ENCODE measurements at regions of chr19 and their contacts with region 1.

Region 1: GRCh38 chr19:36489118-36489919 is at the start of gene ZNF566:
- DNase-seq: peak; percentile 97
- ATAC-seq: peak; percentile 95
- H3K4me3 ChIP-seq: peak within 1 kb of the TSS; percentile 64
- H3K27ac ChIP-seq: peak within 1 kb of the TSS; percentile 91
- H3K4me1 ChIP-seq: no peaks in the 10 kb centered on the region
- H3K27me3 ChIP-seq: no peaks in the 10 kb centered on the region
- CTCF ChIP-seq: no peak
- POLR2A ChIP-seq: peak; percentile 75
- RAD21 ChIP-seq: no peak
- total RNA-seq, gene ZNF566: 4.8 and 8.6 TPM in 2 replicates

Region 2: DNA sequence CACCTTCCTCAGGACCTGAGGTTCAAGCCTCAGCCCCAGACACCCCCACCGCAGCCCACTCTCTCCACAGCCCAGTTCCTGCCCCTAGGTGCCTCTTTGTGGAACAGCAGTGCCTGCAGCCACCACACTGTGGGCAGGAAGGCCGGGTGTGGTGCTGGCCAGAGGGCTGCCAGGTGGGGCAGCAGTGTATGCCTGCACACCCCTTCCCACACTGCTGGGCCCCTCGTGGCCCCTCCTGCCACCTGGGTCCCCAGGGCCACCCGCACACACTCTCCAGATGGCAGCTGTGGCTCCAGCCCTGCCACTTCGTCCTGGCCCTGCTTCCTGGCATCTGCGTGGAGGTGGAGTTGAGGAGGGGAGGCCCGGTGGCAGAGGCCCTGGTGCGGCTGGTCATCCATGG is 1412.7 kb before region 1 on chr19:
- CTCF ChIA-PET with region 1: no interaction called
- POLR2A ChIA-PET with region 1: no interaction called
- dilution Hi-C with region 1: no loop called
- in situ Hi-C with region 1: no loop called
- intact Hi-C with region 1: no loop called
- DNase-seq: no peak
- ATAC-seq: no peak
- H3K4me3 ChIP-seq: no peak overlapping the region
- H3K27ac ChIP-seq: no peak overlapping the region
- H3K4me1 ChIP-seq: no peaks in the 10 kb centered on the region
- H3K27me3 ChIP-seq: peaks cover 12% of the 10 kb centered on the region
- CTCF ChIP-seq: no peak
- POLR2A ChIP-seq: no peak
- RAD21 ChIP-seq: no peak

Region 3: DNA sequence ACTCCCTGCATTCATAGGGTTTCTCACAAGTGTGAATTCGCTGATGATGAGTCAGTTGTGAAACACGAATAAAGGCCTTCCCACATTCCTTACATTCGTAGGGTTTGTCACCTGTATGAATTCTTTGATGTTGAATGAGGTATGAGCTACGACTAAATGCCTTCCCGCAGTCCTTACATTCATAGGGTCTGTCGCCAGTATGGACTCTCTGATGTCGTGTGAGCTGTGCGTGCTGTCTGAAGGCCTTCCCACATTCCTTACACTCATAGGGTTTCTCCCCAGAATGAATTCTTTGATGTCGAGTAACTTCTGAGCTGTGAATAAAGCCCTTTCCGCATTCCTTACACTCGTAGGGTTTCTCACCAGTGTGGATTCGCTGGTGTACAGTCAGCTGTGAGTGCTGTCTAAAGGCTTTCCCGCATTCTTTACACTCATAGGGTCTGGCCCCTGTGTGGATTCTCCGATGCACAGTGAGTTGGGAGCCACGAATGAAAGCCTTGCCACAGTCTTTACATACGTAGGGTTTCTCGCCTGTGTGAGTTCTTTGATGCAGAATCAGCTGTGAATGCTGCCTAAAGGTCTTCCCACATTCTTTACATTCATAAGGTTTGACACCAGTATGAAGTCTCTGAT is 306.6 kb before region 1 on chr19:
- CTCF ChIA-PET with region 1: no interaction called
- POLR2A ChIA-PET with region 1: no interaction called
- dilution Hi-C with region 1: no loop called
- in situ Hi-C with region 1: loop called (anchors 25 kb)
- intact Hi-C with region 1: no loop called
- DNase-seq: peak; percentile 77
- ATAC-seq: peak; percentile 70
- H3K4me3 ChIP-seq: no peak overlapping the region
- H3K27ac ChIP-seq: 0 out of 2 replicates have a peak overlapping the region, but pooled peaks have one; percentile 6
- H3K4me1 ChIP-seq: peaks cover 2% of the 10 kb centered on the region; the same call in 1 of the 2 replicates
- H3K27me3 ChIP-seq: no peaks in the 10 kb centered on the region
- CTCF ChIP-seq: no peak
- POLR2A ChIP-seq: no peak
- RAD21 ChIP-seq: no peak

Region 4: GRCh38 chr19:36214386-36215275 is 274.7 kb before region 1 on chr19 and contains the starts of genes ZNF146 and ZNF565:
- CTCF ChIA-PET with region 1: interaction called, 3 read pairs
- POLR2A ChIA-PET with region 1: no interaction called
- dilution Hi-C with region 1: no loop called
- in situ Hi-C with region 1: no loop called
- intact Hi-C with region 1: loop called (anchors 5 kb)
- DNase-seq: peak; percentile 98
- ATAC-seq: peak; percentile 96
- H3K4me3 ChIP-seq: peak within 1 kb of the TSS; percentile 67
- H3K27ac ChIP-seq: peak within 1 kb of the TSS; percentile 92
- H3K4me1 ChIP-seq: peaks cover 2% of the 10 kb centered on the region
- H3K27me3 ChIP-seq: no peaks in the 10 kb centered on the region
- CTCF ChIP-seq: no peak
- POLR2A ChIP-seq: peak; percentile 88
- RAD21 ChIP-seq: no peak
- total RNA-seq, gene ZNF146: 106 and 129 TPM in 2 replicates
- total RNA-seq, gene ZNF565: 6.4 and 7.5 TPM in 2 replicates

Region 5: DNA sequence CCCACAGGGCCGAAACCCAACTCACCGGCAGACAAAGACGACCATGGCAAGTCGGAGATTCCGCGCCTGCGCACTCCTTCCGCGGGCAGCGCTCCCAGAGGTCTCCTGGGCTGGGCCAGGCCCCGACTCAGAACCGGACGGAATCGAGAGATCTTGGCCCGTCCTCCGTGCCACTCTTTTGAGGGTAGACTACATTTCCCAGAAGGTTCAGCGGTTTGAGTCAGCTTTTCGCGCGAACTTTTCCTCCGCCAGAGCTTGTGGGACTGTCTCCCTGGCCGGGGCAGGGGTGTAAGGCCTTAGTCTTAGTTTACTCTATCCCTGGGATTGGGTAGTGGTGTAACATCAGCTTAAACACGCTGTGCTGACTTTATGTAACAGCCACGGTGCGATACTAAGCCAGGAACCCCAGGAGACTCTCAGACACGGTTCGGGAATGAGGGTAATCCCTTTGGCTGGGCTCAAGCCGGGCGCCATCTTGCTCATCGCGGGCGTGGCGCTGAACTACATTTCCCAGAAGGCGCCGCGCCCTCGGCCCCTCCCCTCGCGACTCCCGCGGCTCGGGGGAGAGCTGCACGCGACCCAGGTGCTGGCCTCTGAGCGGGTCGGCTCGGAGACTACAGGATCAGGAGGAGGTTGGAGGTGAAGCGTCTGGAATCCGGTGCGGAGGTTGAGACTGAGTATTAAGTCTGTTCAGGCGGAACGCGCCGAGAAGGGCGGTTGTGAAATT is 39.0 kb after region 1 on chr19 and contains the start of gene ZNF260:
- CTCF ChIA-PET with region 1: no interaction called
- POLR2A ChIA-PET with region 1: no interaction called
- dilution Hi-C with region 1: no loop called
- in situ Hi-C with region 1: no loop called
- intact Hi-C with region 1: no loop called
- DNase-seq: peak; percentile 97
- ATAC-seq: peak; percentile 95
- H3K4me3 ChIP-seq: peak within 1 kb of the TSS; percentile 82
- H3K27ac ChIP-seq: peak within 1 kb of the TSS; percentile 92
- H3K4me1 ChIP-seq: 0 out of 2 replicates have a peak, but pooled peaks cover 1% of the 10 kb centered on the region
- H3K27me3 ChIP-seq: no peaks in the 10 kb centered on the region
- CTCF ChIP-seq: 0 out of 2 replicates have a peak, but pooled peaks have one; percentile 5
- POLR2A ChIP-seq: peak; percentile 70
- RAD21 ChIP-seq: no peak
- total RNA-seq, gene ZNF260: 11.3 and 15.0 TPM in 2 replicates

Region 6: GRCh38 chr19:36688058-36688457 is 198.7 kb after region 1 on chr19:
- CTCF ChIA-PET with region 1: no interaction called
- POLR2A ChIA-PET with region 1: no interaction called
- dilution Hi-C with region 1: no loop called
- in situ Hi-C with region 1: no loop called
- intact Hi-C with region 1: no loop called
- DNase-seq: no peak
- ATAC-seq: no peak
- H3K4me3 ChIP-seq: peak overlapping the region; percentile 86
- H3K27ac ChIP-seq: peak overlapping the region; percentile 75; the same call in 1 of the 2 replicates
- H3K4me1 ChIP-seq: no peaks in the 10 kb centered on the region
- H3K27me3 ChIP-seq: no peaks in the 10 kb centered on the region
- CTCF ChIP-seq: no peak
- POLR2A ChIP-seq: no peak
- RAD21 ChIP-seq: no peak